ENCODE measurements at regions of chr11 and their contacts with region 1.

Region 1: GRCh38 chr11:8566613-8567210 is 27.3 kb downstream of the STK33 start:
- DNase-seq: no peak
- ATAC-seq: no peak

Region 2: GRCh38 chr11:8219257-8220021 is 347.3 kb before region 1 on chr11:
- intact Hi-C with region 1: loop called (anchors 5 kb)
- DNase-seq: peak; percentile 49
- ATAC-seq: peak; percentile 81

Region 3: DNA sequence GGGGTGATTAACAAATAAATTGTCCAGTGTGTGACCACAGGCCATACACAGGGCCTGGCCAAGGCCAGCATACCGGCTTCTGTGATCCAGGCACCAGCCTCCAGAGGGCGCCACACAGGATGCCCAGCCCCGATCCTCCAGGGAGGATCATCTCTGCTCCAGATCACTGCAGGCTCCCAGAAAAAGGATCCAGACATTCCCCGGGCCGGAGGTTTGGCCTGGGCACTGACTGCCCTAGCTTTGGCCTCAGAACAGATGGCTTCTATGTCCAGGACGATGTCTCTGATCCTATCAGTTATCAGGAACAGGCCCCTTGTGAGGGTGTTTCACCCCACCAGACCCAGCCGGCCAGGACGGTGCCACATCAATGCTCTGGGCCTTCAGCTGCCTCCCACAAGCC is 228.6 kb before region 1 on chr11:
- intact Hi-C with region 1: loop called (anchors 10 kb)
- DNase-seq: peak; percentile 66
- ATAC-seq: peak; percentile 79